Right cardiac atrium (tissue), 5 donors: ENCODE measurements at regions of chr1 and their contacts with region 1.

Region 1: DNA sequence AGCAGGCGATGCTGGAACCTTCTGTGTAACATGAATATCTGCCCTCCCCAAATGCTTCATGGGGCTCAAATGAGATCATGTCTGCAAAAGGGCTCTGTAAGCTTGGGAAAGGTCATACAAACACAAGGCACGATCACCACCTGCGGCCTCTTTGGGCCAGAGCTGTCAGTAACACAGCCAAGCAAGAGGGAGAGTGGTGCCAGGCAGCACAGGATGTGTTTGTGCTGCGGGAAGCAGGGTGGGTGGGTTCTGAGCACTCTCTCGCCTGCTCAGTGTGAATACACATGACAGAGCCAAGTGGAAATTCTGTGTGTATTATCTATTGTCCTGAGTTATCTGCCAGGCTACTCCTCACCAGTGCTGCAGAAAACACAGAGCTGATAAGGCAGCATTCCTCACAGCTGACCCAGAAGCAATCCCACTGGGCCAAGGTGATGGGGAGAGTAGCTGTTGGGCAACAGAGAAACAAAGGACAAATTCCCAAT is 101.2 kb downstream of the LAMC2 start:
- DNase-seq: peak; percentile 81 to 92 (median 90)
- ATAC-seq: peak; percentile 91 to 94
- H3K4me3 ChIP-seq: no peak overlapping the region
- H3K27ac ChIP-seq: peak overlapping the region; percentile 95
- H3K4me1 ChIP-seq: peaks cover 18% of the 10 kb centered on the region
- H3K27me3 ChIP-seq: no peaks in the 10 kb centered on the region

Region 2: DNA sequence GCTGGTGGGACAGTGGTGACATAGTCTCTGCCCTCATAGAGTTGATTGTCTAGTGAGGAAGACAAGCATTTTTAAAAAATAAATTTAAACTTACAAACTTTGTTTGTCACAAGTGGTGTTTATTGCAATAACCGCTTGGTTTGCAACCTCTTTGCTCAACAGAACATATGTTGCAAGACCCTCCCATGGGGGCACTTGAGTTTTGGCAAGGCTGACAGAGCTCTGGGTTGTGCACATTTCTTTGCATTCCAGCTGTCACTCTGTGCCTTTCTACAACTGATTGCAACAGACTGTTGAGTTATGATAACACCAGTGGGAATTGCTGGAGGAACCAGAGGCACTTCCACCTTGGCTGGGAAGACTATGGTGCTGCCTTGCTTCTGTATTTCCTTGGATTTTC is 42.8 kb before region 1 on chr1:
- intact Hi-C with region 1: no loop called
- DNase-seq: peak; percentile 90 to 95 (median 93)
- ATAC-seq: peak; percentile 65 to 70
- H3K4me3 ChIP-seq: no peak overlapping the region
- H3K27ac ChIP-seq: peak overlapping the region; percentile 87
- H3K4me1 ChIP-seq: peaks cover 11% of the 10 kb centered on the region
- H3K27me3 ChIP-seq: no peaks in the 10 kb centered on the region

Region 3: GRCh38 chr1:183310753-183311479 is 23.7 kb after region 1 on chr1:
- intact Hi-C with region 1: loop called in 3 of 4 experiments (anchors 2 to 5 kb)
- DNase-seq: no peak
- ATAC-seq: peak; percentile 45 to 80
- H3K4me3 ChIP-seq: no peak overlapping the region
- H3K27ac ChIP-seq: peak overlapping the region; percentile 33
- H3K4me1 ChIP-seq: peaks cover 7% of the 10 kb centered on the region
- H3K27me3 ChIP-seq: no peaks in the 10 kb centered on the region

Region 4: GRCh38 chr1:183318433-183318832 is 31.2 kb after region 1 on chr1:
- intact Hi-C with region 1: loop called in 2 of 4 experiments (anchors 2 to 5 kb)
- DNase-seq: peak; percentile 84 to 93 (median 89)
- ATAC-seq: peak; percentile 97
- H3K4me3 ChIP-seq: no peak overlapping the region
- H3K27ac ChIP-seq: peak overlapping the region; percentile 82
- H3K4me1 ChIP-seq: peaks cover 11% of the 10 kb centered on the region
- H3K27me3 ChIP-seq: no peaks in the 10 kb centered on the region